CD8-positive, alpha-beta T cell (primary cell): ENCODE measurements at regions of chr4 and their contacts with region 1.

Region 1: DNA sequence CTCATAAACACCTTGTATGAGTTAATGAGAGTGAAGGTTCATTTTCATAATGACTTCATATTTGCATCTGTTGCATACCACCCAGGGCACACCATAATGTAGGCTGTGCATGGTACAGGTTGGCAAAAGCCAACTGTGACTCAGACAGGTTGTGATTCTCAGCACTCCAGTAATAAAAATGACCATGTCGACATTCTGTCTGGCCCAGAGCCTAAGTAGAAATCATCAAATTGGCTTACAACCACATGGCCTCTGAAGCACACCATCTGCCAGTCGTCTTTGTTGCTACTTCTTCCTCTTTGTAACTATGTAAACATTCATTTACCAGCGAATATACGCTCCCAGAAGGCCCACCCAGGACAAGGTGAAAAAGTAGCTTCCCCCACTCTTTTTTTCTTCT is 459.5 kb downstream of the GASK1B start:
- DNase-seq: no peak
- ATAC-seq: no peak
- H3K4me3 ChIP-seq: no peak overlapping the region
- H3K4me3 Mint-ChIP-seq: no peak overlapping the region
- H3K27ac ChIP-seq: no peak overlapping the region
- H3K27ac Mint-ChIP-seq: no peak overlapping the region
- H3K4me1 ChIP-seq: no peaks in the 10 kb centered on the region
- H3K4me1 Mint-ChIP-seq: no peaks in the 10 kb centered on the region
- H3K27me3 ChIP-seq: no peaks in the 10 kb centered on the region
- H3K27me3 Mint-ChIP-seq: no peaks in the 10 kb centered on the region
- CTCF ChIP-seq: no peak

Region 2: GRCh38 chr4:157674699-157675098 is 38.6 kb before region 1 on chr4:
- CTCF ChIA-PET with region 1: no interaction called
- POLR2A ChIA-PET with region 1: no interaction called
- intact Hi-C with region 1: no loop called
- DNase-seq: no peak
- ATAC-seq: no peak
- H3K4me3 ChIP-seq: no peak overlapping the region
- H3K4me3 Mint-ChIP-seq: no peak overlapping the region
- H3K27ac ChIP-seq: no peak overlapping the region
- H3K27ac Mint-ChIP-seq: no peak overlapping the region
- H3K4me1 ChIP-seq: no peaks in the 10 kb centered on the region
- H3K4me1 Mint-ChIP-seq: no peaks in the 10 kb centered on the region
- H3K27me3 ChIP-seq: no peaks in the 10 kb centered on the region
- H3K27me3 Mint-ChIP-seq: no peaks in the 10 kb centered on the region
- CTCF ChIP-seq: no peak

Region 3: GRCh38 chr4:157687971-157688370 is 25.4 kb before region 1 on chr4:
- CTCF ChIA-PET with region 1: no interaction called
- POLR2A ChIA-PET with region 1: no interaction called
- intact Hi-C with region 1: loop called in 1 of 2 experiments (anchors 1 kb)
- DNase-seq: no peak
- ATAC-seq: no peak
- H3K4me3 ChIP-seq: no peak overlapping the region
- H3K4me3 Mint-ChIP-seq: no peak overlapping the region
- H3K27ac ChIP-seq: no peak overlapping the region
- H3K27ac Mint-ChIP-seq: no peak overlapping the region
- H3K4me1 ChIP-seq: no peaks in the 10 kb centered on the region
- H3K4me1 Mint-ChIP-seq: no peaks in the 10 kb centered on the region
- H3K27me3 ChIP-seq: no peaks in the 10 kb centered on the region
- H3K27me3 Mint-ChIP-seq: no peaks in the 10 kb centered on the region
- CTCF ChIP-seq: no peak